Activated T-helper 1 cell treated with anti-CD3 and anti-CD28 coated beads, Interleukin-12 subunit alpha, Interleukin-12 subunit beta, Interleukin-2, Interleukin-4 antibody, amounts not matched to agents 30 ng/mL and 10 ng/mL and 1 ng/mL, durations not matched to agents 14 hours and 24 hours and 36 hours (primary cell): ENCODE measurements at regions of chr19 and their contacts with region 1.

Region 1: GRCh38 chr19:57350877-57351805 is at the start of gene ZNF304:
- DNase-seq: peak; percentile 84
- H3K4me3 Mint-ChIP-seq: peak within 1 kb of the TSS; percentile 92
- H3K27ac Mint-ChIP-seq: peak within 1 kb of the TSS; percentile 90
- H3K4me1 Mint-ChIP-seq: peaks cover 29% of the 10 kb centered on the region
- H3K27me3 Mint-ChIP-seq: no peaks in the 10 kb centered on the region
- total RNA-seq, gene ZNF304: 6.1 and 6.6 TPM in 2 replicates

Region 2: DNA sequence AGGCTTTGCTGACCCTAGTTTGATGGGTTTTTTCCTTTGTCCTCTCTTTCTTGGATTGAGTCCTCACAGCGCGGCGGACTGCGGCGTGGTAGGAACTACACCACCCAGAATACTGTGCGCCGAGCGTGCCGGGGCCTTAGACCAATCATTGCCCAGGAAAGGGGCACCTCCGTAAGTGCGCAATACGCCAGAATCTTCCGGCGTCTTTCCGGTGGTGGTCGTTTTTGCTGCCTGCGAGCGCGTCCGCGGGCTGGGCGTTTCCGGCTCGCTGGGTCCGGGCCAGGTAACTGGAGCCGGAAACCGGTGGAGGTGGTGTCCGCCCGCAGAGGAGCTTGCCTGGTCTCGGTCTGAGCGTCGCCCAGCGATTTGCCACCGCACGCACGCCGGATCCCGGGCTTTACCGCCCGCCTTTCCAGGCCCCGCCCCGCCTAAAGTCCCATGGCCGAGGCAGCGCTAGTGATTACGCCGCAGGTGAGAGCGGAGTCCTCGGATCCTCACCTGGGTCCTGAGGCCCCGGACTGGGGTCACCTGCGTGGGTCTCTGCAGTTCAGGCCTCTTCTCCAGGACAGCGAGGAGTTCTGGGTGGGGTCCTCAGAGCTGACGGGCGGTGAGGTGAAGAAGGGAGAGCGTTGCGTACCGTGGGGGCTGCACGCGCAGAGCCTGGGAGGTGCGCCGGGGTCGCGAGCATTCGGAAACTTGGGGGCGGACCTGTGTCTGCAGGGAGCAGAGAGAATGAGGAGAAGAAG is 176.2 kb after region 1 on chr19 and contains the start of gene ZNF549:
- intact Hi-C with region 1: loop called (anchors 5 kb)
- DNase-seq: peak; percentile 85
- H3K4me3 Mint-ChIP-seq: peak within 1 kb of the TSS; percentile 93
- H3K27ac Mint-ChIP-seq: peak within 1 kb of the TSS; percentile 76
- H3K4me1 Mint-ChIP-seq: peaks cover 20% of the 10 kb centered on the region
- H3K27me3 Mint-ChIP-seq: peaks cover 2% of the 10 kb centered on the region
- total RNA-seq, gene ZNF549: 3.6 and 4.2 TPM in 2 replicates